Kidney (tissue), 22 donors: ENCODE measurements at regions of chr19 and their contacts with region 1.

Region 1: GRCh38 chr19:8654591-8655339 is 24.3 kb downstream of the NFILZ start:
- DNase-seq: peak; percentile 64 to 84 (median 67)
- H3K4me3 ChIP-seq: no peak overlapping the region
- H3K27ac ChIP-seq: no peak overlapping the region
- H3K4me1 ChIP-seq: no peaks in the 10 kb centered on the region
- H3K27me3 ChIP-seq: no peaks in the 10 kb centered on the region
- CTCF ChIP-seq: peak; percentile 92

Region 2: GRCh38 chr19:8526345-8527067 is 128.3 kb before region 1 on chr19:
- intact Hi-C with region 1: no loop called
- DNase-seq: peak; percentile 96 to 98 (median 98)
- H3K4me3 ChIP-seq: peak overlapping the region; percentile 67 to 77 (median 69)
- H3K27ac ChIP-seq: peak overlapping the region; percentile 61 to 82
- H3K4me1 ChIP-seq: no peaks in the 10 kb centered on the region
- H3K27me3 ChIP-seq: no peaks in the 10 kb centered on the region
- CTCF ChIP-seq: no peak

Region 3: GRCh38 chr19:9075064-9075949 is 420.5 kb after region 1 on chr19:
- intact Hi-C with region 1: loop called (anchors 10 kb)
- DNase-seq: peak; percentile 68 to 96 (median 82)
- H3K4me3 ChIP-seq: no peak overlapping the region
- H3K27ac ChIP-seq: no peak overlapping the region
- H3K4me1 ChIP-seq: peaks cover 0 to 4% (median 0%) of the 10 kb centered on the region in 3 donors
- H3K27me3 ChIP-seq: no peaks in the 10 kb centered on the region
- CTCF ChIP-seq: no peak